ENCODE measurements at regions of chr16 and their contacts with region 1.

Region 1: DNA sequence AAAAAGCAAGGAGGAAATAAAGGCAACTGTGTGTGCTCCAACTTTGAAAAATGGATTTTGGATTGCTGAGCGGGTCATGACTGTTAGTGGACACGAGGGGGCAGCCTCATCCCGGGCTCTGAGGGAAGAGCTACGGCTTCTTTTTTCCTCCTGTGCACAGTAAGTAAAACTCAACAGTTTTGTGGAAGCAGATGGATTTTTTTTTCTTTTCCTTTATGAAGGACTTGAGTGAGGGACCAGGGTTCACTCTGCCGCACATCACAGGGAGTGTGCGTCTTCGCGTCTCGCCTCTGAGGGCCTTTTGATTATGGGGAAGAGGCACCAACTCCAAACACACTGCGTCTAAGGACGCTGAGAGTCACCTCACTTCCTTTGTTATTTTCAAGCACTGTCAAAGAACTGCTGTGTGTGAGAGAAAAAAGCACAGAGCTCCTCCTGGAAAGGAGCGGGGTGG is 80.3 kb upstream of the GOT2 start:
- DNase-seq: peak in 1 of 2 experiments; percentile 59
- H3K4me3 ChIP-seq: no peak overlapping the region
- H3K4me3 Mint-ChIP-seq: peak overlapping the region; percentile 45
- H3K27ac Mint-ChIP-seq: no peak overlapping the region
- H3K4me1 ChIP-seq: no peaks in the 10 kb centered on the region
- H3K4me1 Mint-ChIP-seq: no peaks in the 10 kb centered on the region
- H3K27me3 ChIP-seq: no peaks in the 10 kb centered on the region
- H3K27me3 Mint-ChIP-seq: peaks cover 20% of the 10 kb centered on the region
- CTCF ChIP-seq: peak; percentile 94 to 98

Region 2: GRCh38 chr16:59164461-59164860 is 350.1 kb after region 1 on chr16:
- CTCF ChIA-PET with region 1: interaction called, 4 read pairs
- POLR2A ChIA-PET with region 1: no interaction called
- intact Hi-C with region 1: loop called (anchors 5 kb)
- DNase-seq: peak in 1 of 2 experiments; percentile 40
- H3K4me3 ChIP-seq: no peak overlapping the region
- H3K4me3 Mint-ChIP-seq: no peak overlapping the region
- H3K27ac Mint-ChIP-seq: no peak overlapping the region
- H3K4me1 ChIP-seq: no peaks in the 10 kb centered on the region
- H3K4me1 Mint-ChIP-seq: no peaks in the 10 kb centered on the region
- H3K27me3 ChIP-seq: 0 out of 2 replicates have a peak, but pooled peaks cover 1% of the 10 kb centered on the region
- H3K27me3 Mint-ChIP-seq: peaks cover 7% of the 10 kb centered on the region
- CTCF ChIP-seq: no peak

Region 3: GRCh38 chr16:59249011-59249410 is 434.6 kb after region 1 on chr16:
- CTCF ChIA-PET with region 1: interaction called, 3 read pairs
- POLR2A ChIA-PET with region 1: no interaction called
- intact Hi-C with region 1: loop called (anchors 1 kb)
- DNase-seq: peak; percentile 23 to 37
- H3K4me3 ChIP-seq: no peak overlapping the region
- H3K4me3 Mint-ChIP-seq: no peak overlapping the region
- H3K27ac Mint-ChIP-seq: no peak overlapping the region
- H3K4me1 ChIP-seq: no peaks in the 10 kb centered on the region
- H3K4me1 Mint-ChIP-seq: no peaks in the 10 kb centered on the region
- H3K27me3 ChIP-seq: no peaks in the 10 kb centered on the region
- H3K27me3 Mint-ChIP-seq: no peaks in the 10 kb centered on the region
- CTCF ChIP-seq: no peak

Measured in Caco-2 (cell line).